Common myeloid progenitor, CD34-positive (primary cell): ENCODE measurements at regions of chr2 and their contacts with region 1.

Region 1: DNA sequence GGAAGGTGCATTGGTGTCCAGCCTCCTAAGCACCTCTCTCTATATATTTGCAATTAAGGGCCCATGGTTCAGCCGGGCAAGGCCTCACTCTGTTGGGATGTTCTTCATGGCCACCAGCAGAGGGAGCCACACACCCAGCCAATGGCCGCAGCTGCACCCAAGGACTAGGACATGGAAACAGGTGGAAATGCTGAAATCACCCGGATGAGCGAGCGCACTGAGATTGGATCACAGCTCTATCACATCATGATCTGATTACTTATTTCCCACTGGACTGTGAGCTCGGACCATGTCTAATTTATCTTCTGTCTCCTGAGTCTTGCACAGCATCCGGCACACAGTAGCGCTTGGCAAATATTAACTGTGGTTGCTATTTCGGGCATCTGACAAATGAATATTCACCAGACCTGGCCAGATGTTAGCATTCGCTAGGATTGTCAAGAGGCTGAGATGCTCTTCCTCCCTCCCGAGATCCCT is 31.2 kb downstream of the KIF3C start:
- DNase-seq: peak; percentile 81 to 90 (median 84)
- H3K4me3 ChIP-seq: no peak overlapping the region
- H3K27ac ChIP-seq: no peak overlapping the region
- H3K4me1 ChIP-seq: no peaks in the 10 kb centered on the region
- H3K27me3 ChIP-seq: no peaks in the 10 kb centered on the region

Region 2: DNA sequence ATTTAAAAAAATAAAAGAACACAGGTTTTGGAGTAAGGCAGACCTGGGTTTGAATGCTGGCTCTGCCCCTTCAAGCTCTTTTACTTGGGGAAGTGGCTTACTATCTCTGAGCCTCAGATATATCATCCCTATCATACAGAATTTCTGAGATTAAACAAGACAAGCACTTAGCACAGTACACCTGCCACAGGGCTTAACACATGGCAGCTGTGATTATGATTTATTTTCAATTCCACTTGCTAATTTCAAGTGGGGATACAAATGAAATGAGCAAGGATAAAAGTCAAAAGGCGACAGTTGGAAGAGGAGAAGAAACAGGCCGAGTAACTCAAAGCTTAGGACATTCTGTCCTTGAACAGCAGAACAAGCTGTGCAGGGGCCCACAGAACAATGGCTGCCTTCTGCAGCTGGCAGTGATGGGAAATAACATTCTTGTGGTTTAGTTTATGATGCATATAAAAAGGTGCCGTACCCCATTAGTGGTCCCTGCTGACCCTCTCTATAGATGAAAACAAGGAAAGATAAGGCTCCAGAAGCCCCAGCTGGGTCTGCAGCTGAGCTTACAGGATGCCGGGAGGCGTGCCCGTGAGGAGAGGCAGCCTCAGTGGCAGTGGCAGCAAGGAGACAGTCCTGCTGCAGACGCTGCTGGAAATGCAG is 14.1 kb before region 1 on chr2:
- CTCF ChIA-PET with region 1: interaction called, 19 read pairs
- POLR2A ChIA-PET with region 1: no interaction called
- DNase-seq: no peak
- H3K4me3 ChIP-seq: no peak overlapping the region
- H3K27ac ChIP-seq: no peak overlapping the region
- H3K4me1 ChIP-seq: no peaks in the 10 kb centered on the region
- H3K27me3 ChIP-seq: no peaks in the 10 kb centered on the region

Region 3: DNA sequence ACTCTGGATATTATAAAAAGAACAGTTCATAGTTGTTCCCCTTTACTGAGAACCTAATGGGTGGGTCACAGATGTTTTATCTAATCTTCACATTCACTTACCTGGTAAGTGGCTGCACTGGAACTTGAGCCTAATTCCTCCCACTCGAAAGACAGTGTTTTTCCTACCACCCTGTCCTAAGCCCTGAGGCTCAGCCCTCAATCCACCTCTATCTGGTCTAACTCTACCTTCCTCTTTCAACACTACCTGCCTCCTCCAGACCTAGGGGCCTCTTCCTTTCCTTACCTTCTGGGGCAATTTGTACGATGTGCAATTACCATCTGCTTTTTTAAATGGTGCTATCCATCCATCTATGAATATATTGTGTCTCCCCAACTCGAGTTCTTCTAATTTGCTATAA is 40.9 kb after region 1 on chr2:
- CTCF ChIA-PET with region 1: interaction called, 18 read pairs
- POLR2A ChIA-PET with region 1: interaction called, 3 read pairs
- DNase-seq: no peak
- H3K4me3 ChIP-seq: peak overlapping the region in 2 of 7 experiments; percentile 37 to 65
- H3K27ac ChIP-seq: no peak overlapping the region
- H3K4me1 ChIP-seq: peaks cover 6 to 9% (median 8%) of the 10 kb centered on the region in 4 experiments
- H3K27me3 ChIP-seq: no peaks in the 10 kb centered on the region

Region 4: GRCh38 chr2:26852405-26853306 is 901.5 kb after region 1 on chr2:
- CTCF ChIA-PET with region 1: no interaction called
- POLR2A ChIA-PET with region 1: no interaction called
- DNase-seq: no peak
- H3K4me3 ChIP-seq: no peak overlapping the region
- H3K27ac ChIP-seq: no peak overlapping the region
- H3K4me1 ChIP-seq: peaks cover 0 to 24% (median 20%) of the 10 kb centered on the region in 4 experiments
- H3K27me3 ChIP-seq: peaks cover 16 to 60% (median 22%) of the 10 kb centered on the region in 5 experiments